PC-3 (cell line): ENCODE measurements at regions of chr14 and their contacts with region 1.

Region 1: DNA sequence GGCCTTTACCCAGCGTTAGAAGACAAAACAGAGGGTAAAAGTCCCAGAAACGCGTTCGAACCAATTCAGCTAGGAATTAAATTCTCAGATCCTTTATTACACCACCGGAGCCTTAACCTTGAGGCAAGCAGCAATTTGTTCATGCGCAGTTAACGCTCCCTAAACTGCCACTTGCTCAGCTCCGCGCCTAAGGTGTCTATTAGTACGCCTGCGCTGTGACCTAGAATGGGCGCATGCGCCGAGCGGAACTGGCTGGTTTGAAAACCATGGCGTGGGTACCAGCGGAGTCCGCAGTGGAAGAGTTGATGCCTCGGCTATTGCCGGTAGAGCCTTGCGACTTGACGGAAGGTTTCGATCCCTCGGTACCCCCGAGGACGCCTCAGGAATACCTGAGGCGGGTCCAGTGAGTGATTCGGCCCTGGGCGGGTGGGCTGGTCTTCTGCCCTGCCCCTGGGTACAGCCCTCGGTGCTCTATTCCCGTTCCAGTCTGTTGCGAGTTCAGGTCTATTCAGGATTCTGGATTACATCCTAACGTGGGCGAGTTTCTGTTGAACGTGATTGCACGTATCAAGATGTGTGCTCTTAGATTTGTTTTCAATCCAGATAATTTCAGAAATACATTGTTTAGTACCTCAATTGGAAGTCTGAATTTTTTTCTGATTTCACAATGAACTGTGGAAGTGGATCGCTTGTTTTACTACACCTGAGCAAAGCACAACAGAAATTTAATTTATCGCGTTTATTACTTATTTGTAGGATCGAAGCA is at the start of gene GEMIN2:
- DNase-seq: peak; percentile 97
- ATAC-seq: peak; percentile 98
- H3K4me3 ChIP-seq: peak within 1 kb of the TSS; percentile 90
- H3K27ac ChIP-seq: peak within 1 kb of the TSS; percentile 56
- H3K4me1 ChIP-seq: peaks cover 15% of the 10 kb centered on the region
- H3K27me3 ChIP-seq: no peaks in the 10 kb centered on the region
- CTCF ChIP-seq: no peak
- total RNA-seq, gene GEMIN2: 42.7 and 48.1 TPM in 2 replicates

Region 2: DNA sequence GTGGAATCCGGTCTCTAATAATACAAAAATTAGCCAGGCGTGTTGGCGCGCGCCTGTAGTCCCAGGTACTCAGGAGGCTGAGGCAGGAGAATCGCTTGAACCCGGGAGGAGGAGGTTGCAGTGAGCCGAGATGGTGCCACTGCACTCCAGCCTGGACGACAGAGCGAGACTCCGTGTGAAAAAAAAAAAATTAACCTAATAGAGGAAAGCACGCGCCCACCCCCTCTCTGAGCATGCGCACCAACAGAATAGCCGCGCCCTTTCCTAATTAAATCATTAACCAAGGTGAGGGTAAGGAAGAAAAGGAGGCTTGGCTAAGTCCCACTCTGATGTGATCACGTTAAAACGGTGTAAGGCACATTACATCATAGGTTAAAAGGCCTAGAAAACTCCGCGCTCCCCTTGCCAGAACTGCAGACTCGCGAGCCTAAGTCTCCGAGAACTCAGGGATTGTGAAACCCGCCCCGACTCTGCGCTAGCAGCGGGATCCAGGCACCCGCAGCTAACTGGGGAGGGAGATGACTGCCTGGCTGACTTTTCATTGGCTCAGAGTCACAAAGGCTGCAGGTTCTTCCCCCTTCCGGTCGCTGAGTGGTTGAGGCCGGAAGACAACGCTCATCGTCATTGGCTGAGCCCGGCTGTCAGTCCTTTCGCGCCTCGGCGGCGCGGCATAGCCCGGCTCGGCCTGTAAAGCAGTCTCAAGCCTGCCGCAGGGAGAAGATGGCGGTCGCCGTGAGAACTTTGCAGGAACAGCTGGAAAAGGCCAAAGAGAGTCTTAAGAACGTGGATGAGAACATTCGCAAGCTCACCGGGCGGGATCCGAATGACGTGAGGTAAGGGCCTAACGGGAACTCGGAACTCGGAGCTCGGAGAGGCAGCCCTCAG is 60.5 kb after region 1 on chr14 and contains the start of gene PNN:
- CTCF ChIA-PET with region 1: interaction called, 3 read pairs
- POLR2A ChIA-PET with region 1: interaction called, 5 read pairs
- intact Hi-C with region 1: loop called (anchors 2 kb)
- DNase-seq: peak; percentile 99
- ATAC-seq: peak; percentile 89
- H3K4me3 ChIP-seq: peak within 1 kb of the TSS; percentile 96
- H3K27ac ChIP-seq: peak within 1 kb of the TSS; percentile 51
- H3K4me1 ChIP-seq: peaks cover 17% of the 10 kb centered on the region
- H3K27me3 ChIP-seq: no peaks in the 10 kb centered on the region
- CTCF ChIP-seq: no peak
- total RNA-seq, gene PNN: 36.7 and 45.6 TPM in 2 replicates